Activated T-helper 1 cell treated with anti-CD3 and anti-CD28 coated beads, Interleukin-12 subunit alpha, Interleukin-12 subunit beta, Interleukin-2, Interleukin-4 antibody, amounts not matched to agents 30 ng/mL and 10 ng/mL and 1 ng/mL, durations not matched to agents 14 hours and 24 hours and 36 hours (primary cell): ENCODE measurements at regions of chr18 and their contacts with region 1.

Region 1: GRCh38 chr18:22169007-22169864 is at the start of gene GATA6:
- DNase-seq: no peak
- H3K4me3 Mint-ChIP-seq: peak within 1 kb of the TSS; percentile 85
- H3K27ac Mint-ChIP-seq: peak within 1 kb of the TSS; percentile 58
- H3K4me1 Mint-ChIP-seq: no peaks in the 10 kb centered on the region
- H3K27me3 Mint-ChIP-seq: peaks cover 67% of the 10 kb centered on the region
- total RNA-seq, gene GATA6: not detected in 2 replicates

Region 2: GRCh38 chr18:22348521-22349316 is 179.5 kb after region 1 on chr18:
- intact Hi-C with region 1: loop called (anchors 2 kb)
- DNase-seq: no peak
- H3K4me3 Mint-ChIP-seq: no peak overlapping the region
- H3K27ac Mint-ChIP-seq: no peak overlapping the region
- H3K4me1 Mint-ChIP-seq: no peaks in the 10 kb centered on the region
- H3K27me3 Mint-ChIP-seq: peaks cover 51% of the 10 kb centered on the region